HepG2 (cell line): ENCODE measurements at regions of chr6 and their contacts with region 1.

Region 1: GRCh38 chr6:55250400-55250799 is 76.1 kb downstream of the HCRTR2 start:
- DNase-seq: no peak
- ATAC-seq: no peak
- H3K4me3 ChIP-seq: no peak overlapping the region
- H3K27ac ChIP-seq: no peak overlapping the region
- H3K4me1 ChIP-seq: no peaks in the 10 kb centered on the region
- H3K27me3 ChIP-seq: no peaks in the 10 kb centered on the region
- CTCF ChIP-seq: no peak
- EP300 ChIP-seq: no peak
- POLR2A ChIP-seq: no peak
- RAD21 ChIP-seq: no peak

Region 2: DNA sequence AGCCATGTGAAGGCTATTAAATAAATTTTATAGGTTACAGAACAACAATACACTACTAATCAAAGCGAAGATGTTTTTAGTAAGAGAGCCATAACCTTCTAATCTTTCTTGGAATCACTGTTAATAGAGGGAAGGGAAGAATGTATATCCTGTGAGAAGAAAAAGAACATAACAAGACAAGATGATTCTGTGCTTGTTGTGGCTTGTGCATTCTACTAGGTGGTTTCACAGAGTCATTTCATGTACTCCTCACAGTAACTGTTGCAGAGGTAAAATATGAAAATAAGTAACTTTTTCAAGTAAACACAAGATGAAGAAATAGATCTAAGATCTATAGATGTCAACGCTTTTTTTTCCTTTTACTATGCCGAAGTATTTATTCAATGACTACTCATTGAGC is 520.7 kb before region 1 on chr6:
- CTCF ChIA-PET with region 1: no interaction called
- POLR2A ChIA-PET with region 1: no interaction called
- in situ Hi-C with region 1: loop called (anchors 25 kb)
- intact Hi-C with region 1: loop called (anchors 5 kb)
- DNase-seq: no peak
- ATAC-seq: no peak
- H3K4me3 ChIP-seq: no peak overlapping the region
- H3K27ac ChIP-seq: no peak overlapping the region
- H3K4me1 ChIP-seq: no peaks in the 10 kb centered on the region
- H3K27me3 ChIP-seq: no peaks in the 10 kb centered on the region
- CTCF ChIP-seq: no peak
- EP300 ChIP-seq: no peak
- POLR2A ChIP-seq: no peak
- RAD21 ChIP-seq: no peak